ENCODE measurements at regions of chr22 and their contacts with region 1.

Region 1: DNA sequence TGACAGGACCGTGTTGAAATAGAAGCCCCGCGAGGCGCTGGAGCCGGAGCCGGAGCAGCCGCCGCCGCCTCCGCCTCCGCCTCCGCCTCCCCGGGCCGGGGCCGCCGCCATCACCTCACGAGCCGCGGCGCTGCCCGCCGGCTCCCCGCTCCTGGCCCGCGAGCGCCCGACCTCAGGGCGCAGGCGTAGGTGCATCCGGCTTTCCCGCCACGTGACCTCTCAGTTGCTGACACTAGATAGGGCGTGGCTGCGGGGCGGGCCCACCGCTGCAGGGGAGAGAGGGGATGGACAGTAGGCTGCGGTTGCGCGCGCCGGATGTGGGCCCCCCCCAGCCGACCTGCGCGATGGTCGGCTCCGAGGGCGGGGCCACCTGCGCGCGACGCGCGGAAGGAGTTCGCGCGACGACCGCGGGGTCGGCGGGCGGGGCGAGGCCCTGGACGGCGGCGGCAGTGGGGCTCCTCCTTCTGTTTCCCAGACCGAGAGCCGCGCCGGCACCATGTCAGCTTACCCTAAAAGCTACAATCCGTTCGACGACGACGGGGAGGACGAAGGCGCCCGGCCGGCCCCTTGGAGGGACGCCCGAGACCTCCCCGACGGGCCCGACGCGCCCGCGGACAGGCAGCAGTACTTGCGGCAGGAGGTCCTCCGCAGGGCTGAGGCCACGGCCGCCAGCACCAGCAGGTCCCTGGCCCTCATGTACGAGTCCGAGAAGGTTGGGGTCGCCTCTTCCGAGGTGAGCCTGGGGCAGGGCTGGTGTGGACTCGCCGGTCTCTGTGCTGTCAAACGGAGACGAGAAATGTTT is at the starts of genes PI4KA and SNAP29:
- DNase-seq: peak; percentile 100
- H3K4me3 ChIP-seq: peak within 1 kb of the TSS; percentile 79 to 98 (median 88)
- H3K27ac ChIP-seq: peak within 1 kb of the TSS; percentile 78 to 97 (median 92)
- H3K4me1 ChIP-seq: peaks cover 32 to 93% (median 64%) of the 10 kb centered on the region in 6 donors
- H3K27me3 ChIP-seq: no peaks in the 10 kb centered on the region
- CTCF ChIP-seq: peak in 4 of 11 experiments; percentile 31 to 58 (median 51)
- POLR2A ChIP-seq: peak in 2 of 3 donors; percentile 73 to 74
- total RNA-seq, gene PI4KA: 86.2 to 143 (median 122) TPM
- total RNA-seq, gene SNAP29: 22.6 to 33.5 (median 28.2) TPM

Region 2: DNA sequence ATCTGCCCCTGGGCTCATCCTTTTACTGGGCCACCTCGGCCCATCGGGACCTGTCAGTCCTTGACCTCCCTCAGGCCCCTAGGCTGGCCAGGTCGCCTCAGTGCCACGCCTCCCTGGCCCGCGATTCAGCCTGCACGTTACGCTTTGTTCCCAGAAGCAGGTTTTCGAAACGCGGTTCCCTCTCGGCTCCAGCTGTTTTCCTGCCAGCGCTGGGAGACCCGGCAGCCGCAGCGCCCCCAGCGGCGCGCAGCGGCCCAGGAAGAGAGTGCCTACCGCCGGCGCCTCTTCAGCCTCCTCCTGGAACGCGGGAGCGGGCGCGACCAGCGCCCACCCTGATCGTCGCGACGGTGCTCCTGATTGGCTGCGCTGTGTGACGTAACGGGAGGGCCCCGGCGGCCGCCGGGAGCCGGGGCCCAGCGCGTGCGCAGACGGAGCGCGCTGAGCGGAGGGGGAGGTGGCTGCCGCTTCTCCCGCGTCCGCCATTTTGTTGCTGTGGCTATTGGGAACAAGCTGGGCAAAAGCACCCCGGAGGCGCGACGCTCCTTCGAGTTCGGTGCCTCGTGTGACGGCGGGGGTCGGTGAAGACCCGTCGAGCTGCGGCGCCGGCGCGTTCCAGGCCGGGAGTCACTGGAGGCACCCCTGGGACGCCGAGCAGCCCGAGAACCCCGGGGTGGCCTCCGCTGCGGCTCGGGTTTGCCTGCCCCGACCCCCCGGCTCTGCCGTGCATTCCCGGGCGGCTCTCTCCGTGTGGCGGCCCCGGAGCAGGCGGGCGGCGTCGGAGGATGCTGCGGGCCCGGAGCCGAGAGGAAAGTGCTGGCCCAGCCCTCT is 58.4 kb after region 1 on chr22 and contains the start of gene CRKL:
- intact Hi-C with region 1: loop called (anchors 5 kb)
- DNase-seq: peak; percentile 99
- H3K4me3 ChIP-seq: peak within 1 kb of the TSS; percentile 93 to 100 (median 98)
- H3K27ac ChIP-seq: peak within 1 kb of the TSS; percentile 87 to 97 (median 96)
- H3K4me1 ChIP-seq: peaks cover 21 to 50% (median 42%) of the 10 kb centered on the region in 6 donors
- H3K27me3 ChIP-seq: no peaks in the 10 kb centered on the region
- CTCF ChIP-seq: peak; percentile 89 to 100 (median 97)
- POLR2A ChIP-seq: peak in 1 of 3 donors; percentile 71
- total RNA-seq, gene CRKL: 56.7 to 65.3 (median 58.1) TPM

Region 3: DNA sequence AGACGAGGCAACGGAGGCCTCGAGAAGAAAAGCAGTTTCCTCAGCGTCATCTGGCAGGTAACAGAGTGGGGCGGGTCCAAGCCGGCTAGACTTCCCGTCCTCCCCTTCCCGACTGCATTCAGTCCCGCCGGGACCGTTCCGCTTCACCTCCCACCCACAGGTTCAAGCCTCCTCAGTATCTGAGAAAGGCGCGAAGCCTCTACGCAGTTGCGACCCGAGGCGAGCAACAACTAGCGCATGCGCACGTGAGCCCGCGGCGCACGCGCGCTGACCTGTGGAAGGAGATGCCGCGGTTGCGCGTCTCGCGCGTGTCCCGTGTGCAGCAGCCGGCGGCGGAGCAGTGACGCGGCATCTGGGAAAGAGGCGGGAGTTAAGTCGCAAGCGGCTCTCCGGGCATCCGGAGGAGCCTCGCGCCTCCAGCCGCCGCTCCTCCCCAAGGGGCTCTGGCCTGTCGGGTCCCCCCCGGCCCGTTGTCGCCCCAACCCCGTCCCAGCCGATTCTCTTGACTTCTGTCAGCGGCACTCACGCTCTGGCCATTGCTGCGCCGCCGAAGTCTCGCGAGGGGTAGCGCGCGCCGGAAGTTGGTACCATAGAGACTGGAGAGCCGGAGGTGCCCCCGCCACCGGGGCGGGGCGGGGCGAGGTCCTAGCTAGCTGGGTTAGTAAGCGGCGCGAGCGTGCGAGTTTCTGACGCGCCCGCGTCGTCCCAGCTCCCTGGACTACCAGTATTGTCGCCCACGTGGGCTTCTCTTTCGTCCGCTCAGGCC is 142.9 kb after region 1 on chr22 and contains the start of gene THAP7:
- intact Hi-C with region 1: no loop called
- DNase-seq: peak; percentile 100
- H3K4me3 ChIP-seq: peak within 1 kb of the TSS; percentile 66 to 85 (median 74)
- H3K27ac ChIP-seq: peak within 1 kb of the TSS; percentile 96 to 100 (median 98)
- H3K4me1 ChIP-seq: peaks cover 30 to 55% (median 37%) of the 10 kb centered on the region in 6 donors
- H3K27me3 ChIP-seq: no peaks in the 10 kb centered on the region
- CTCF ChIP-seq: peak in 3 of 11 experiments; percentile 29 to 36 (median 35)
- POLR2A ChIP-seq: peak in 2 of 3 donors; percentile 31 to 70
- total RNA-seq, gene THAP7: 16.7 to 38.7 (median 26.5) TPM

Measured in spleen (tissue), 13 donors.